Activated CD4-positive, alpha-beta memory T cell treated with anti-CD3 and anti-CD28 coated beads for 36 hours (primary cell): ENCODE measurements at regions of chr1 and their contacts with region 1.

Region 1: GRCh38 chr1:149927503-149928387 is at the start of gene SF3B4:
- DNase-seq: peak; percentile 97
- H3K4me3 Mint-ChIP-seq: peak within 1 kb of the TSS; percentile 98
- H3K27ac Mint-ChIP-seq: peak within 1 kb of the TSS; percentile 87
- H3K4me1 Mint-ChIP-seq: peaks cover 39% of the 10 kb centered on the region
- H3K27me3 Mint-ChIP-seq: no peaks in the 10 kb centered on the region
- total RNA-seq, gene SF3B4: 72.7 to 75.7 TPM

Region 2: GRCh38 chr1:149899460-149900293 is 28.1 kb before region 1 on chr1 and contains the start of gene BOLA1:
- CTCF ChIA-PET with region 1: interaction called, 3 read pairs
- POLR2A ChIA-PET with region 1: interaction called, 6 read pairs
- intact Hi-C with region 1: loop called (anchors 1 kb)
- DNase-seq: peak; percentile 90
- H3K4me3 Mint-ChIP-seq: peak within 1 kb of the TSS; percentile 90
- H3K27ac Mint-ChIP-seq: peak within 1 kb of the TSS; percentile 94
- H3K4me1 Mint-ChIP-seq: peaks cover 19% of the 10 kb centered on the region
- H3K27me3 Mint-ChIP-seq: no peaks in the 10 kb centered on the region
- total RNA-seq, gene BOLA1: 27.9 to 29.6 TPM

Region 3: GRCh38 chr1:149917571-149918144 is 10.1 kb before region 1 on chr1 and contains the start of gene SV2A:
- CTCF ChIA-PET with region 1: no interaction called
- POLR2A ChIA-PET with region 1: no interaction called
- intact Hi-C with region 1: loop called (anchors 1 kb)
- DNase-seq: peak; percentile 74
- H3K4me3 Mint-ChIP-seq: peak within 1 kb of the TSS; percentile 79
- H3K27ac Mint-ChIP-seq: no peak within 1 kb of the TSS
- H3K4me1 Mint-ChIP-seq: peaks cover 29% of the 10 kb centered on the region
- H3K27me3 Mint-ChIP-seq: no peaks in the 10 kb centered on the region
- total RNA-seq, gene SV2A: 9.6 to 9.8 TPM